ENCODE measurements at regions of chr14 and their contacts with region 1.

Region 1: GRCh38 chr14:35416108-35416750 is 11.7 kb upstream of the NFKBIA start:
- ATAC-seq: no peak
- H3K4me3 ChIP-seq: no peak overlapping the region
- H3K27ac ChIP-seq: no peak overlapping the region
- H3K4me1 ChIP-seq: peaks cover 0 to 4% of the 10 kb centered on the region in 2 donors

Region 2: DNA sequence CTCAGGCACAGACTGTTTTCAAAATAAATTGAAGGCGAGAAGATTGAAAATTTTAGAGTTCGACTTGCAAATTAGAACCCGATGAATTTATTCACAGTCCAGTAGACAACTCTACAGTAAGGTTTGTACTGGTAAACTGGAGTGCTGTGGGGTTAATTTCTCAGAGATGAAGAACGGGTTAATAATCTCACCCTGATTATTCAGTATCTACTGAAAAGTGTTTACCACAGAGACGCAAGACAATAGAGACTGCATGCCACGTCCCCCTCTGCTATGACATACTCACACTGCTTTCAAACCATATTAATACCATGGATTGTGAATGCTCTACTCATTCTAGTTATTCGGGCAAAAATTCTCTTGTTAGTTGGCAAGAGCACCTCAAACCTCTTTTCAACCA is 737.9 kb before region 1 on chr14:
- in situ Hi-C with region 1: loop called in 4 of 9 experiments (anchors 10 to 25 kb)
- ATAC-seq: peak; percentile 48 to 75 (median 66)
- H3K4me3 ChIP-seq: no peak overlapping the region
- H3K27ac ChIP-seq: no peak overlapping the region
- H3K4me1 ChIP-seq: peaks cover 7 to 9% of the 10 kb centered on the region in 2 donors

Region 3: GRCh38 chr14:35134328-35135123 is 281.7 kb before region 1 on chr14:
- in situ Hi-C with region 1: loop called in 5 of 9 experiments (anchors 10 to 25 kb)
- ATAC-seq: no peak
- H3K4me3 ChIP-seq: no peak overlapping the region
- H3K27ac ChIP-seq: no peak overlapping the region
- H3K4me1 ChIP-seq: no peaks in the 10 kb centered on the region

Region 4: DNA sequence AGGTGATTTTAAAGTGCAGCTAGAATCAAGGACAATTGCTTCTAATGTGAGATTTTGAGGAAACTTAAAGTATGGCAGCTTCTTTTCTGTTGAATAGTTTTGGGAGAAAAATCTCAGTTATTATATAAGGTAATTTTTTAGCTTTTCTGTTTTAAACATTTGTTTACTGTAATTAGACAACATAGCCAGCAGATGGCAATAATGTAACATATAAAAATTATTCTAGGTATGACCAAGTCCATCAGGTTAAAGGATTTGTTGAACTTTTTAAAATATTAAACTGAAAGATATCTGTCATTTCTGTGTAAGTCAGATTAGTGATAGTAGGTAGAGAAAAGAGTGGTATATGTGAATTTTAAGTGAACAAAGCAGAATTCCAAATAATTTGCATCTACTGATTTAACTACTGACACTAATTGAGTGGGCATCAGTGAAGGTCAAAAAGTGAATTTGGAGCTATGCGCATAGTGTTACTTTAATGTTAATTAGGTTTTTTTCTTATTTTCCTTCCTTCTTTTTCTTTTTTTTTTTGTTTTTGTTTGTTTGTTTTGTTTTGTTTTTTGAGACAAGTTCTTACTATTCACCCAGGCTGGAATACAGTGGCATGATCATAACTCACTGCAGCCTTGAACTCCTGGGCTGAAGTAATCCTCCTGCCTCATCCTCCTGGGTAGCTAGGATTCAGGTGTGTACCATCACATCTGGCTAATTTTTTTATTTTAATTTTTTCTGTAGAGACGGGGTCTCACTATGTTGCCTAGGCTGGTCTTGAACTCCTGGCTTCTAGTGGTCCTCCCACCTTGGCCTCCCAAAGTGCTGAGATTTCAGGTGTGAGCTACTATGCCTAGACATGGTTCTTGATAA is 275.3 kb before region 1 on chr14:
- in situ Hi-C with region 1: loop called (anchors 10 to 25 kb)
- ATAC-seq: peak in 2 of 8 experiments; percentile 19 to 56
- H3K4me3 ChIP-seq: no peak overlapping the region
- H3K27ac ChIP-seq: no peak overlapping the region
- H3K4me1 ChIP-seq: no peaks in the 10 kb centered on the region

Region 5: DNA sequence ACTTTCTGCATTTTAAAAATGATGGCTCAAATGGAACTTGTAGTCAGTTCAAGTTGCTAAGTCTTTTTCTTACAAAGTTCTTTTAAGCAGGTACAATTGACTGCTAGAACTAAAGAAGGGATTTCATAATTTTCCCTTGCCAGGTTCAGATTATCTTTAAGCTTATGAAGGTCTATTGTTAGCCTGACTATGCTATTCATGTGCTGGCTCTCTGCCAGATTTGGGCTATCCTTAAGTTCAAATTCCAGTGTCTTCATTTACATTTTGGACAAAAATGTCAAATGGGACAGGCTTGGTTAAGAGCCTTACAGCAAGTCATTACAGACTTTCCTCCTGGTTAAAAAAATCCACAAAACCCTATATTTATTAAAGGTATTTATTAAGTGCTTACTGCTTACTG is 160.0 kb after region 1 on chr14:
- in situ Hi-C with region 1: no loop called
- ATAC-seq: peak in 3 of 8 experiments; percentile 31 to 73 (median 73)
- H3K4me3 ChIP-seq: no peak overlapping the region
- H3K27ac ChIP-seq: no peak overlapping the region
- H3K4me1 ChIP-seq: no peaks in the 10 kb centered on the region

Region 6: DNA sequence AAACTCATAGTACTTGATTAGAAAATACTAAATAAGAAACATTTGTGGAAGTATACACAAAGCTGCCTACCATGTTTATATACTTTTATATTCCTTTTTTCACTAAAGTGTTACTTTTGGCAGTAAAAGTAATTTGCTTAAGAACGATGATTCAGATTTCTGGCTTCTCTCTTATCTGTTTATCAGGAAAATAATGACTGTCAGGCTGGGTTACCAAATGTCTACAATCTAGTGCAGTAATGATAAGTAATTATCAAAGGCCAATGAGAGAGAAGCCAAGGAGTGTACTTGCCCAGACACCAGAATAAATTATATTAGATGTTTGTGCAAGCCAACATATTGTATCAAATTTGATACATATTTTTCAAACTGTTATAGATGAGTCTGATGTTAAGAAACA is 279.4 kb after region 1 on chr14:
- in situ Hi-C with region 1: no loop called
- ATAC-seq: no peak
- H3K4me3 ChIP-seq: no peak overlapping the region
- H3K27ac ChIP-seq: no peak overlapping the region
- H3K4me1 ChIP-seq: no peaks in the 10 kb centered on the region